ENCODE measurements at regions of chr2 and their contacts with region 1.

Region 1: GRCh38 chr2:128232965-128233789 is 85.5 kb downstream of the HS6ST1 start:
- DNase-seq: peak; percentile 77
- ATAC-seq: peak; percentile 98
- H3K4me3 Mint-ChIP-seq: peak overlapping the region; percentile 82
- H3K27ac Mint-ChIP-seq: no peak overlapping the region
- H3K4me1 Mint-ChIP-seq: peaks cover 5% of the 10 kb centered on the region
- H3K27me3 Mint-ChIP-seq: peaks cover 8% of the 10 kb centered on the region
- CTCF ChIP-seq: peak; percentile 72

Region 2: DNA sequence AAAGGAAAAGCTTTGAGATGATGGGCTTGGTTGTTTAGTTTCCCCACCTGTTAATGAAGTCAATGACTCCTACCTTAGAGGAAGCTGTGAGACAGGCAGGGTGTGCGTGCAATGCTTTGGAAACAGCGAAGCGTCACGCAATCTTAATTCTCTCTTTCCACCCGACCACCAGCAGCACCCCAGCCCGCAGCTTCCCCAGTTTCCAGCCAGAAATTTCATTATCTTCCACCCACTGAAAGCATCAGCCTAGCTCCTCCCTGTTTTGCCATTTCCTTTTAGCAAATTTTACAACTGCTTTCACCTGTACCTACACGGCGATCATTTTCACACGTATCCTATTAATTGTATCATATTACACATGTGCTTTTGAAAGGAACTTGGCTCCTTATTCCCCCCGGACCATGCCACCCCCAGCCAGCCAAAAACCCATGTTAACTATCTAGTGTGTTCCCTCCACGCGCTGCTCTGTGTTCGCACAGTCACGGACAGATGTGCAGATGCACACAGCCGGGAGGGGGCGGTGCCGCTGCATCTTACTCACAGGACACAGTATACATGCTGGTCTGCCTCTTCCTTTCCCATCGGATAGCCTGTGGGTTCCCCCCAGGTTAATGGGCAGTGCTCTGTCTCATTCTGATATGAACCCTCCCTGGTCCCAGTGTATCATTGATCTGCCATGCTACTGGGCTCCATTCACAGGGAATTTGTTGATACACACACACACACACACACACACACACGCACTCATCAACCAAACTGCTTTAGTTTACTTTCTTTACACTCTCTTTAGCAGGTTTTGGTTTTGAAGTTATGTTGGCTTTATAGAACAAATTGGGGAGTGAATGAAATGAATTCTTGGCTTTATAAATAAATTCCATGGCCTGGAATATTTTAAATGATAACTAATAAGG is 1035.4 kb before region 1 on chr2:
- CTCF ChIA-PET with region 1: no interaction called
- POLR2A ChIA-PET with region 1: no interaction called
- intact Hi-C with region 1: loop called (anchors 5 kb)
- DNase-seq: no peak
- ATAC-seq: peak; percentile 86
- H3K4me3 Mint-ChIP-seq: peak overlapping the region; percentile 49
- H3K27ac Mint-ChIP-seq: no peak overlapping the region
- H3K4me1 Mint-ChIP-seq: peaks cover 5% of the 10 kb centered on the region
- H3K27me3 Mint-ChIP-seq: no peaks in the 10 kb centered on the region
- CTCF ChIP-seq: no peak

Region 3: GRCh38 chr2:127884436-127885345 is 348.5 kb before region 1 on chr2:
- CTCF ChIA-PET with region 1: no interaction called
- POLR2A ChIA-PET with region 1: no interaction called
- intact Hi-C with region 1: loop called (anchors 5 kb)
- DNase-seq: no peak
- ATAC-seq: no peak
- H3K4me3 Mint-ChIP-seq: peak overlapping the region; percentile 88
- H3K27ac Mint-ChIP-seq: peak overlapping the region; percentile 83
- H3K4me1 Mint-ChIP-seq: peaks cover 34% of the 10 kb centered on the region
- H3K27me3 Mint-ChIP-seq: no peaks in the 10 kb centered on the region
- CTCF ChIP-seq: no peak

Region 4: GRCh38 chr2:128062571-128062970 is 170.6 kb before region 1 on chr2:
- CTCF ChIA-PET with region 1: interaction called, 3 read pairs
- POLR2A ChIA-PET with region 1: interaction called, 3 read pairs
- intact Hi-C with region 1: loop called (anchors 1 kb)
- DNase-seq: no peak
- ATAC-seq: no peak
- H3K4me3 Mint-ChIP-seq: no peak overlapping the region
- H3K27ac Mint-ChIP-seq: no peak overlapping the region
- H3K4me1 Mint-ChIP-seq: no peaks in the 10 kb centered on the region
- H3K27me3 Mint-ChIP-seq: peaks cover 1% of the 10 kb centered on the region
- CTCF ChIP-seq: no peak

Region 5: DNA sequence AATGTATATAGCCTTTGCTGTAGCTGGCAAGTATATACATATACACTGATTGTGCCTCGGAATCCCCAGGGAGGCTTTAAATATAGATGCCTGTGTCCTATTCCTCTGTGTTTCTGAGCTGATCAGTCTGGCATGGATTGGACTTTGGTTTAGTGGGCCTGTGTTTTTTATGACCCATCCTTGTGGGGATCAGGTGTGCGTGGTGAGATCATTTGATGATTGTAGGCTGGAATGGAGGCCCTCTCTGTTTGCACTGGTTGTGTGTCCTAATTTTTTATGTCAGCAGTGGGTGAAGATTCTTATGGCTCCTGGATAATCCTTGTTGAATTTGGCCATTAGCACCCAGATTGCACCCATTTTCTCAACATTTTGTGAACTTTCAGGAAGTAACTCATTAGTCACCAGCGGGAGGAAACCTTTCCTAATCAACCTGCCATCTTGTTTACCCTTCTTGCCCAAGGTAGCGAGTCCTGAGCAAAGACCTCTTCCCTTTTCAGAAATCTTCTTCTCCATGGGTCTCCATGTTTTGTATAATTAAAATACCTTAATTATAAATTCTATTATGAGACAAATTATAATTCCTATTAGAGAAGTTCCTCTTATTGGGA is 66.3 kb before region 1 on chr2:
- CTCF ChIA-PET with region 1: no interaction called
- POLR2A ChIA-PET with region 1: no interaction called
- intact Hi-C with region 1: no loop called
- DNase-seq: no peak
- ATAC-seq: no peak
- H3K4me3 Mint-ChIP-seq: no peak overlapping the region
- H3K27ac Mint-ChIP-seq: no peak overlapping the region
- H3K4me1 Mint-ChIP-seq: peaks cover 5% of the 10 kb centered on the region
- H3K27me3 Mint-ChIP-seq: no peaks in the 10 kb centered on the region
- CTCF ChIP-seq: no peak

Region 6: GRCh38 chr2:128178650-128179460 is 54.3 kb before region 1 on chr2:
- CTCF ChIA-PET with region 1: interaction called, 3 read pairs
- POLR2A ChIA-PET with region 1: no interaction called
- intact Hi-C with region 1: loop called (anchors 2 kb)
- DNase-seq: no peak
- ATAC-seq: peak; percentile 37
- H3K4me3 Mint-ChIP-seq: no peak overlapping the region
- H3K27ac Mint-ChIP-seq: no peak overlapping the region
- H3K4me1 Mint-ChIP-seq: no peaks in the 10 kb centered on the region
- H3K27me3 Mint-ChIP-seq: no peaks in the 10 kb centered on the region
- CTCF ChIP-seq: no peak

Region 7: GRCh38 chr2:128291161-128291843 is 58.1 kb after region 1 on chr2:
- CTCF ChIA-PET with region 1: no interaction called
- POLR2A ChIA-PET with region 1: interaction called, 11 read pairs
- intact Hi-C with region 1: no loop called
- DNase-seq: no peak
- ATAC-seq: peak; percentile 95
- H3K4me3 Mint-ChIP-seq: no peak overlapping the region
- H3K27ac Mint-ChIP-seq: no peak overlapping the region
- H3K4me1 Mint-ChIP-seq: peaks cover 28% of the 10 kb centered on the region
- H3K27me3 Mint-ChIP-seq: no peaks in the 10 kb centered on the region
- CTCF ChIP-seq: no peak

Region 8: GRCh38 chr2:128347701-128348539 is 114.7 kb after region 1 on chr2:
- CTCF ChIA-PET with region 1: no interaction called
- POLR2A ChIA-PET with region 1: no interaction called
- intact Hi-C with region 1: no loop called
- DNase-seq: no peak
- ATAC-seq: no peak
- H3K4me3 Mint-ChIP-seq: no peak overlapping the region
- H3K27ac Mint-ChIP-seq: no peak overlapping the region
- H3K4me1 Mint-ChIP-seq: no peaks in the 10 kb centered on the region
- H3K27me3 Mint-ChIP-seq: no peaks in the 10 kb centered on the region
- CTCF ChIP-seq: no peak

Region 9: GRCh38 chr2:128549646-128550260 is 316.6 kb after region 1 on chr2:
- CTCF ChIA-PET with region 1: no interaction called
- POLR2A ChIA-PET with region 1: no interaction called
- intact Hi-C with region 1: no loop called
- DNase-seq: no peak
- ATAC-seq: no peak
- H3K4me3 Mint-ChIP-seq: no peak overlapping the region
- H3K27ac Mint-ChIP-seq: no peak overlapping the region
- H3K4me1 Mint-ChIP-seq: no peaks in the 10 kb centered on the region
- H3K27me3 Mint-ChIP-seq: no peaks in the 10 kb centered on the region
- CTCF ChIP-seq: no peak

Measured in activated B cell treated with CpG ODN at 0.5 μM for 24 hours (primary cell).